ENCODE measurements at regions of chr12 and their contacts with region 1.

Region 1: GRCh38 chr12:108633534-108634248 is at the start of gene SELPLG:
- DNase-seq: peak; percentile 79
- ATAC-seq: peak; percentile 76
- H3K4me3 Mint-ChIP-seq: peak within 1 kb of the TSS; percentile 85
- H3K27ac Mint-ChIP-seq: peak within 1 kb of the TSS; percentile 98
- H3K4me1 Mint-ChIP-seq: peaks cover 95% of the 10 kb centered on the region
- H3K27me3 Mint-ChIP-seq: no peaks in the 10 kb centered on the region
- CTCF ChIP-seq: no peak
- total RNA-seq, gene SELPLG: 1.8 and 2.0 TPM in 2 replicates

Region 2: GRCh38 chr12:107736914-107737313 is 896.8 kb before region 1 on chr12:
- CTCF ChIA-PET with region 1: no interaction called
- POLR2A ChIA-PET with region 1: no interaction called
- intact Hi-C with region 1: no loop called
- DNase-seq: peak; percentile 53
- ATAC-seq: peak; percentile 99
- H3K4me3 Mint-ChIP-seq: peak overlapping the region; percentile 53
- H3K27ac Mint-ChIP-seq: peak overlapping the region; percentile 93
- H3K4me1 Mint-ChIP-seq: peaks cover 72% of the 10 kb centered on the region
- H3K27me3 Mint-ChIP-seq: no peaks in the 10 kb centered on the region
- CTCF ChIP-seq: no peak

Region 3: DNA sequence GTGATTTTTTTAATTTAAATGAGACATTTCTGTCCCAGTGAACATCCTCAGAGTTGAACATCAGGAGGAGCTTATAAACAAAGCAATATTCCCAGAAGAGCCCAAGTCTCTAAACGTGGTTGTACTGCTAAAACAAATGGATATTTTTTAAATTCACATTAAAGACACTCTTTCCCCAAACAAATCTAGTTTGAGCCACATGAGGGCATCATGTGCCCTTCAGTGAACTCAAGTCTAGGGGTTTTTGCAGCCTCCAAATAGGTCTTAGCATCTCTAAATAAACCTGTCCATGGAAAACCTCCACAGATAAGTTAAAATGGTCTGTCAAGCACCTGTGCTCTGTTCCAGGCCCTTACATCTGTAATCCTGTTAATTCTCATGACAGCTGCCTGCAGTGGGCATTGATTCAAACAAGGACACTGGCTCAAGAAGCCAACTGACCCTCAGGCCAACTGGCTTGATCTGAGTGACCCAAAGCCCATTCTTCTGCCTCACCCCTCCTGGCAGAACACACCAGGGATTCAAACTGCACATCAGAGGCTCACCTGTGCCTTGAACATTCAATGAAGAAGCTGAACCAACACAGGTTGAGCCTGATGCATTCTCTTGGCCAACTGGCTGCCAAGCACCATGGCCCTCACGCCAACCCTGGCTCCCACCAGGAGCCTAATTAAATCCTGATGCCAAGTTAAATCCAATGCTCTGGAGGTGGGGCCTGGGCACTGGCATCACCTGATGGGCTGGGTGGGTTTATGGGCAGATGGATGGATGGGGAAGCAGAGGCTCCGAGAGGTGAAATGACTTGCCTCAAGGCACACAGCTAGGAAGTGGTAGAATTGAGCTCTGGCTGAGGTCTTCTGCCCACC is 62.7 kb before region 1 on chr12:
- CTCF ChIA-PET with region 1: interaction called, 15 read pairs
- POLR2A ChIA-PET with region 1: interaction called, 135 read pairs
- intact Hi-C with region 1: loop called (anchors 1 kb)
- DNase-seq: no peak
- ATAC-seq: no peak
- H3K4me3 Mint-ChIP-seq: no peak overlapping the region
- H3K27ac Mint-ChIP-seq: peak overlapping the region; percentile 97
- H3K4me1 Mint-ChIP-seq: peaks cover 87% of the 10 kb centered on the region
- H3K27me3 Mint-ChIP-seq: no peaks in the 10 kb centered on the region
- CTCF ChIP-seq: no peak

Region 4: GRCh38 chr12:108618079-108618952 is 15.4 kb before region 1 on chr12:
- CTCF ChIA-PET with region 1: interaction called, 137 read pairs
- POLR2A ChIA-PET with region 1: interaction called, 182 read pairs
- intact Hi-C with region 1: loop called (anchors 1 kb)
- DNase-seq: peak; percentile 76
- ATAC-seq: peak; percentile 40
- H3K4me3 Mint-ChIP-seq: peak overlapping the region; percentile 19
- H3K27ac Mint-ChIP-seq: peak overlapping the region; percentile 53
- H3K4me1 Mint-ChIP-seq: peaks cover 70% of the 10 kb centered on the region
- H3K27me3 Mint-ChIP-seq: no peaks in the 10 kb centered on the region
- CTCF ChIP-seq: peak; percentile 60

Region 5: DNA sequence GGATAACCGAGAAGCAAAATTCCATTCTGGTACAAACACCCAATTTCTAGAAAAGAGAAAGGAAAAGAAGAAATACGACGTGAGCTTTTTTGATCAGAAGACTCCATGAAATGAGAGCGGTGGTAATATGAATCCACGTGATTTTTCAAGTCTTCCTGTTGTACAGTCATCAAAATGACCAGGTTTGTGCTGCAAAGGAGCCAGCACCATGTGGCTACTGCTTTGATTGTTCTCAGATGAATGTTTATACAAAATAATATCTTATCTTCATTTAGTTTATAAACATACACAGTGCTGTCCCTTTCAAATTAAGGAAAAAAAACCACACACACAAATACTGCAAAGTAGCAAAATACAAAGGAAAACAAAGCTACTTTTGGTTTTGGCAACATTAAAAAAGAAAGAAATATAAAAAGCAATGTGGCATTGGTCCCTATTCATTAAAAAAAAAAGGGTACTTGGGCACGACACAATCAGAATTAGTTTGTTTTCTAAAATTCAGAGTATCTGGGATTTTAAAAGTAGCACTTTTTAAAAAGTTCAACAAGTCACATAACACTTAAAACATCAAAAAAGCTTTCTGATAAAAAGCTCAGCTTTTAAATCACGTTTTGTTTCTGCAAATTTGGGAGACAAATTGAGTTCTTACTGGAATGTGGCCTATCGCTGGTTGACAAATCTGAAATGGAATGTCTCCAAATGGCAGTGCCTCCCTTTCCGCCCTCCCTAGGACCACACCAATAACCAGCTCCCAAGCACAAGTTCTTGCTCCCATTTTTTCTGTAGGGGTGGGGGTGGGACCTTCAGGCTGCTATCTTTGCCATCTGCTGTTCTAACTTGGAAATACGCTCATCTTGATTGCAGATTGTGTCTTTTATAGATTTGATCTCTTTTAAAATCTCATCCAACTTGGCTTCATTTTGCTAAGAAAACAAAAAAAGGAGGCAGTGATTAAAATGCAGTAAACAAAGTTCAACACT is 13.2 kb after region 1 on chr12:
- CTCF ChIA-PET with region 1: interaction called, 10 read pairs
- POLR2A ChIA-PET with region 1: interaction called, 15 read pairs
- intact Hi-C with region 1: loop called (anchors 1 kb)
- DNase-seq: no peak
- ATAC-seq: no peak
- H3K4me3 Mint-ChIP-seq: peak overlapping the region; percentile 17
- H3K27ac Mint-ChIP-seq: peak overlapping the region; percentile 60
- H3K4me1 Mint-ChIP-seq: peaks cover 57% of the 10 kb centered on the region
- H3K27me3 Mint-ChIP-seq: no peaks in the 10 kb centered on the region
- CTCF ChIP-seq: no peak

Region 6: GRCh38 chr12:108653082-108653516 is 19.4 kb after region 1 on chr12:
- CTCF ChIA-PET with region 1: interaction called, 3 read pairs
- POLR2A ChIA-PET with region 1: interaction called, 13 read pairs
- intact Hi-C with region 1: no loop called
- DNase-seq: no peak
- ATAC-seq: no peak
- H3K4me3 Mint-ChIP-seq: no peak overlapping the region
- H3K27ac Mint-ChIP-seq: peak overlapping the region; percentile 66
- H3K4me1 Mint-ChIP-seq: peaks cover 26% of the 10 kb centered on the region
- H3K27me3 Mint-ChIP-seq: no peaks in the 10 kb centered on the region
- CTCF ChIP-seq: no peak

Region 7: GRCh38 chr12:108856428-108857157 is 222.9 kb after region 1 on chr12:
- CTCF ChIA-PET with region 1: no interaction called
- POLR2A ChIA-PET with region 1: interaction called, 3 read pairs
- intact Hi-C with region 1: loop called (anchors 2 kb)
- DNase-seq: no peak
- ATAC-seq: peak; percentile 7
- H3K4me3 Mint-ChIP-seq: peak overlapping the region; percentile 94
- H3K27ac Mint-ChIP-seq: peak overlapping the region; percentile 88
- H3K4me1 Mint-ChIP-seq: peaks cover 59% of the 10 kb centered on the region
- H3K27me3 Mint-ChIP-seq: no peaks in the 10 kb centered on the region
- CTCF ChIP-seq: no peak